HepG2 (cell line): ENCODE measurements at regions of chr3 and their contacts with region 1.

Region 1: GRCh38 chr3:137105277-137105977 is 147.6 kb downstream of the IL20RB start:
- DNase-seq: peak; percentile 41
- ATAC-seq: peak; percentile 65; the same call in 2 of the 3 replicates
- H3K4me3 ChIP-seq: no peak overlapping the region
- H3K27ac ChIP-seq: no peak overlapping the region
- H3K4me1 ChIP-seq: no peaks in the 10 kb centered on the region
- H3K27me3 ChIP-seq: no peaks in the 10 kb centered on the region
- CTCF ChIP-seq: peak; percentile 69
- EP300 ChIP-seq: no peak
- POLR2A ChIP-seq: no peak
- RAD21 ChIP-seq: peak; percentile 33; the same call in 1 of the 2 replicates

Region 2: DNA sequence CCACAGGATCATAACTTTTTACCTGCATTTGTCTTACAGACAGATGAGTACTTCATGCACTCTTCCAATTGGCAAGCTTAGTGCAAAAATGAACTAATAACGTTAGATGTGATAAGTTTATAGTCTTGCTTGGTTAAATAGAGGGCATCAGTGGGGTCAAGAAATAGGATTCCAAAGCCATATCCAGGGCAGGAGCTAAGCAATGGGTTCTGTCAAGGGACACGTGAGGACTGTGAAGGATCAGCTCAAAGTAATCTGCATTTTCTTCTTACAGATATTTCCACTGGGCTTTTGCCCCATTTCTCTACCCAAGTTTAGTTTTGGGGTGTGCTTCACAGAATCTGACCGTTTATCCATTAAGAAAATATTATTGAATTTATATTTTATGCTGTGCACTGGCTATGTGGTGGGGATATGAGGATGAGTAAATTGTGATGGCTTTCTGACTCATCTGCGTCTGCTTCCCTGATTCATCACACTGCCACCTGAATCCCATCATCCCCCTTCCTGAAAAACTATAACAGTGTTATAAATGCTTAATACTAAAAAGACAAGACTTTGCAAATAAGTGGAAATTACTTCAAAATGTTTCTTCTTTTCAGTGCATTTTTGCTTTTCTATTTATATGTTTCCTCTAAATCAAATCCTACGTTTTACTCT is 1122.4 kb before region 1 on chr3:
- CTCF ChIA-PET with region 1: no interaction called
- POLR2A ChIA-PET with region 1: no interaction called
- in situ Hi-C with region 1: no loop called
- intact Hi-C with region 1: no loop called
- DNase-seq: no peak
- ATAC-seq: no peak
- H3K4me3 ChIP-seq: no peak overlapping the region
- H3K27ac ChIP-seq: no peak overlapping the region
- H3K4me1 ChIP-seq: no peaks in the 10 kb centered on the region
- H3K27me3 ChIP-seq: no peaks in the 10 kb centered on the region
- CTCF ChIP-seq: no peak
- EP300 ChIP-seq: no peak
- POLR2A ChIP-seq: no peak
- RAD21 ChIP-seq: no peak

Region 3: DNA sequence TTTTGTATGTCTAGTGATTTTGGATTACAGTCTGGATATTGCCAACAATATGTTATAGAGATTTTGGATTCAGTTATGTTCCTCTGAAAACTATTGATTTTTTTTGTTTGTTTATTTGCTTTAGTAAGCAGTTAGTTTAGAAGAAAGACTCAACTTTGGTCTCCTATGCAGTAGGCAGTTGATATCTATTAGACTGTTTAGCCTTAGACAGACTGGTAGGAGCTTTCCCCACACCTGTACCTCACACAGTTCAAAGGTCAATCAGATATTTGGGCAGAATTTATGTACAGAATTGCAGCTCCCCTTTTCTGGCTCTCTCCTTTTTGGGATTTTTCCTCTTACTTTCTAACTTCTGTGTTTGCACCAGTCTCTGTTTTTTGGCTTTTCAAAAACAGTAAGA is 105.4 kb before region 1 on chr3:
- CTCF ChIA-PET with region 1: no interaction called
- POLR2A ChIA-PET with region 1: no interaction called
- in situ Hi-C with region 1: no loop called
- intact Hi-C with region 1: no loop called
- DNase-seq: no peak
- ATAC-seq: peak; percentile 47; the same call in 1 of the 3 replicates
- H3K4me3 ChIP-seq: no peak overlapping the region
- H3K27ac ChIP-seq: no peak overlapping the region
- H3K4me1 ChIP-seq: peaks cover 11% of the 10 kb centered on the region
- H3K27me3 ChIP-seq: no peaks in the 10 kb centered on the region; a peak in 1 of 5 replicates
- CTCF ChIP-seq: no peak
- EP300 ChIP-seq: no peak
- POLR2A ChIP-seq: no peak
- RAD21 ChIP-seq: no peak

Region 4: GRCh38 chr3:137062250-137062649 is 43.2 kb before region 1 on chr3:
- CTCF ChIA-PET with region 1: no interaction called
- POLR2A ChIA-PET with region 1: no interaction called
- in situ Hi-C with region 1: no loop called
- intact Hi-C with region 1: no loop called
- DNase-seq: no peak
- ATAC-seq: no peak
- H3K4me3 ChIP-seq: no peak overlapping the region
- H3K27ac ChIP-seq: no peak overlapping the region
- H3K4me1 ChIP-seq: no peaks in the 10 kb centered on the region
- H3K27me3 ChIP-seq: peaks cover 0 to 14% of the 10 kb centered on the region in 2 experiments; a peak in 3 of 5 replicates
- CTCF ChIP-seq: no peak
- EP300 ChIP-seq: no peak
- POLR2A ChIP-seq: no peak
- RAD21 ChIP-seq: no peak

Region 5: GRCh38 chr3:137084586-137084985 is 20.8 kb before region 1 on chr3:
- CTCF ChIA-PET with region 1: no interaction called
- POLR2A ChIA-PET with region 1: no interaction called
- in situ Hi-C with region 1: no loop called
- intact Hi-C with region 1: no loop called
- DNase-seq: no peak
- ATAC-seq: no peak
- H3K4me3 ChIP-seq: no peak overlapping the region
- H3K27ac ChIP-seq: no peak overlapping the region
- H3K4me1 ChIP-seq: no peaks in the 10 kb centered on the region
- H3K27me3 ChIP-seq: no peaks in the 10 kb centered on the region
- CTCF ChIP-seq: no peak
- EP300 ChIP-seq: no peak
- POLR2A ChIP-seq: no peak
- RAD21 ChIP-seq: no peak

Region 6: GRCh38 chr3:137946345-137946973 is 841.0 kb after region 1 on chr3:
- CTCF ChIA-PET with region 1: interaction called, 9 read pairs
- POLR2A ChIA-PET with region 1: no interaction called
- in situ Hi-C with region 1: loop called (anchors 10 kb)
- intact Hi-C with region 1: loop called (anchors 1 kb)
- DNase-seq: peak; percentile 62
- ATAC-seq: peak; percentile 74
- H3K4me3 ChIP-seq: no peak overlapping the region
- H3K27ac ChIP-seq: no peak overlapping the region
- H3K4me1 ChIP-seq: no peaks in the 10 kb centered on the region
- H3K27me3 ChIP-seq: no peaks in the 10 kb centered on the region
- CTCF ChIP-seq: peak; percentile 79
- EP300 ChIP-seq: no peak
- POLR2A ChIP-seq: no peak
- RAD21 ChIP-seq: peak; percentile 63

Region 7: DNA sequence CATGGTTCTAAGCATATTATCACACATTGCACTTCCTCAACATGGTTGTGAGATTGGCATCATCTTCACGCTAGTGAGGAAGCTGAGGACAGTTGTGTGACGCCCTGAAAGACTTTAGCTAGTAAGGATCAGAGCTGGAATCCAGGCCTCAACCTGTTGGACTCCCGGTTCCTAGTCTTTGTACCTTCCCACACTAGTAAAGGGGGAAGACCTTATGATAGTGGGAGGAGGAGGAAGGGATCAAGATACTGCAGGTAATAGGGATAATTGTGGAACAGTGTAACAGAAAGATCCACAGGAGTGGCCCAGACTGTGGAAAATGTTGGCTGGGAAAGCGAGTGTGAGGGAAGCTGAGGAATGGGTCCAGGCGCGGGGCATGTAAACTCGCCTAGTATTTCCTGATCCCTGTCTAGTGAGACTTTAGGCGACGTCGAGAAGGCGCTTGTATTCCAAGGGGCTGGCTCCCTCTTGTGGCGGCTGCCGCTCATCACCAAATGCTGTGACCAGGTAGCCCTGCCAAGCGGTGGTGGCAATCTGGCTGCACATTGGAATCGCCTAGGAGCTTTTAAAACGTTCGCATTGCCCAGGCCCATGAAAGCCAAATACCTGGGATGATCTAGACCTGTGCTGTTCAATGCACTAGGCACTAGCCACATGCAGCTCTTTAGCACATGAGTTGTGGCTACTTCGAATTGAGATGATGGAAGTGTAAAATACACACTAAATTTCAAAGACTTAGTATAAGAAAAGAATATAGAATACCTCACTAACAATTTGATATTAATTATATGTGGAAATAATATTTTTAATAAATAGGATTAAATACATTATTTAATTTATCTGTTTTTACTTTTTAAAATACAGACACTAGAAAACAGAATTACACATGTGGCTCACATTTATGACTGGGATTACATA is 865.7 kb after region 1 on chr3:
- CTCF ChIA-PET with region 1: interaction called, 7 read pairs
- POLR2A ChIA-PET with region 1: no interaction called
- in situ Hi-C with region 1: loop called (anchors 10 kb)
- intact Hi-C with region 1: loop called (anchors 1 kb)
- DNase-seq: peak; percentile 43
- ATAC-seq: peak; percentile 100
- H3K4me3 ChIP-seq: no peak overlapping the region
- H3K27ac ChIP-seq: no peak overlapping the region
- H3K4me1 ChIP-seq: no peaks in the 10 kb centered on the region
- H3K27me3 ChIP-seq: 0 out of 5 replicates have a peak, but pooled peaks cover 0 to 4% of the 10 kb centered on the region in 2 experiments
- CTCF ChIP-seq: peak; percentile 92
- EP300 ChIP-seq: no peak
- POLR2A ChIP-seq: no peak
- RAD21 ChIP-seq: peak; percentile 68